Activated naive CD4-positive, alpha-beta T cell treated with anti-CD3 and anti-CD28 coated beads for 36 hours (primary cell): ENCODE measurements at regions of chr20 and their contacts with region 1.

Region 1: GRCh38 chr20:60057123-60057801 is 99.0 kb downstream of the CDH26 start:
- DNase-seq: peak; percentile 79
- H3K4me3 Mint-ChIP-seq: peak overlapping the region; percentile 68
- H3K27ac Mint-ChIP-seq: no peak overlapping the region
- H3K4me1 Mint-ChIP-seq: peaks cover 43% of the 10 kb centered on the region
- H3K27me3 Mint-ChIP-seq: no peaks in the 10 kb centered on the region

Region 2: GRCh38 chr20:59948828-59949720 is 108.2 kb before region 1 on chr20:
- CTCF ChIA-PET with region 1: interaction called, 21 read pairs
- intact Hi-C with region 1: loop called (anchors 2 kb)
- DNase-seq: peak; percentile 56
- H3K4me3 Mint-ChIP-seq: no peak overlapping the region
- H3K27ac Mint-ChIP-seq: peak overlapping the region; percentile 93
- H3K4me1 Mint-ChIP-seq: peaks cover 23% of the 10 kb centered on the region
- H3K27me3 Mint-ChIP-seq: no peaks in the 10 kb centered on the region

Region 3: GRCh38 chr20:60137629-60138245 is 80.5 kb after region 1 on chr20:
- CTCF ChIA-PET with region 1: interaction called, 5 read pairs
- intact Hi-C with region 1: loop called (anchors 2 kb)
- DNase-seq: peak; percentile 58
- H3K4me3 Mint-ChIP-seq: peak overlapping the region; percentile 60
- H3K27ac Mint-ChIP-seq: no peak overlapping the region
- H3K4me1 Mint-ChIP-seq: peaks cover 6% of the 10 kb centered on the region
- H3K27me3 Mint-ChIP-seq: no peaks in the 10 kb centered on the region

Region 4: GRCh38 chr20:60210779-60211617 is 153.7 kb after region 1 on chr20:
- CTCF ChIA-PET with region 1: interaction called, 15 read pairs
- intact Hi-C with region 1: loop called (anchors 2 kb)
- DNase-seq: peak; percentile 71
- H3K4me3 Mint-ChIP-seq: no peak overlapping the region
- H3K27ac Mint-ChIP-seq: no peak overlapping the region
- H3K4me1 Mint-ChIP-seq: peaks cover 3% of the 10 kb centered on the region
- H3K27me3 Mint-ChIP-seq: peaks cover 2% of the 10 kb centered on the region

Region 5: DNA sequence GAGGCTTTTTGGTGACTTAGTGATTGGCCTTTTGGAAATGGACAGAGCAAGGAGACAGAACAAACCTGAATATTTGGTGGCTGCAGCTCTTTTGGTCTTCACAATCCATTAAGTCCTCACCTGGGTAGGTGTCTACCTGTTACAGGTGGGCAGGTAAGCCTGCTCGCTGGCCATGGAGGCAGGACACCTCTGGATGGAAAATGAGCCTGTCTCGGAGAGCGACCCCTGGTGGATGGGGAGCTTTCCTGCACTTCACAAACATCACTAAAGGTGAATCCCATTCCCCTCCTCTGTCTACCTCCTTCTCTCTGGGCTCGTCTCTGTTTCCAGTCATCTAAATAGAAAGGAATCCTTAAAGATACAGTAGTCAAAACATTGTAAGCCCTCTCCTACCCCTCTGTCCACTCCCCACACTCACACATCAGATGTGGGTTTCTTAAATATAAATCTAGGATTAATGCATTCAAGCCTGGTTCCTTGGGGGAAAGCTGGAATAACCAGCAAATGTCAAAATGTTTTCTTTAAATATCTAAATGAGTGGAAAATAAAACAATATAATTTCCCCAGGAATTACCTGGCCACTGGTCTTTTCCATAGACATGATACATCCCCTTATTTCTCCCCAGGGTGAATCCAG is 205.8 kb after region 1 on chr20:
- CTCF ChIA-PET with region 1: interaction called, 35 read pairs
- intact Hi-C with region 1: loop called (anchors 1 kb)
- DNase-seq: peak; percentile 63
- H3K4me3 Mint-ChIP-seq: no peak overlapping the region
- H3K27ac Mint-ChIP-seq: no peak overlapping the region
- H3K4me1 Mint-ChIP-seq: peaks cover 11% of the 10 kb centered on the region
- H3K27me3 Mint-ChIP-seq: no peaks in the 10 kb centered on the region

Region 6: DNA sequence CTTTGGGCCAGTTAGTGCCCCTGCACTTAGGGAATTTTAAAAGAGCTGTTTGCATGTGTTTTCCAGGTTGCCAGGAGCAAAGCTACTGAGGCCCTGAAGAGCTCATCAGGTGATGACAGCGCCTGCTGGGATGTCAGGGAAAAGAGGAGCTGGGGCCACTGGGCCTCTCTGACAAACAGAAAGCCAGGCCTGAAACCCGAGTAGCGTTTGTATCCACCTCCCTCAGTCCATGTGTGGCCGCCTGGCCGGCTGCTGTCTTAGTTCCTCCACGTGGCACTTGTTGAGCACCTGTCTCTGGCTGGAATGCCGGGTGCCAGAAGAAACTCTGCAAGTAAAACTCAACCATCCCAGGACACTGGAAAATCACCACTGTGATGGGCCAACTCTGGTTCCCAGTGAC is 502.2 kb after region 1 on chr20:
- CTCF ChIA-PET with region 1: no interaction called
- intact Hi-C with region 1: no loop called
- DNase-seq: no peak
- H3K4me3 Mint-ChIP-seq: no peak overlapping the region
- H3K27ac Mint-ChIP-seq: no peak overlapping the region
- H3K4me1 Mint-ChIP-seq: no peaks in the 10 kb centered on the region
- H3K27me3 Mint-ChIP-seq: peaks cover 8% of the 10 kb centered on the region

Region 7: DNA sequence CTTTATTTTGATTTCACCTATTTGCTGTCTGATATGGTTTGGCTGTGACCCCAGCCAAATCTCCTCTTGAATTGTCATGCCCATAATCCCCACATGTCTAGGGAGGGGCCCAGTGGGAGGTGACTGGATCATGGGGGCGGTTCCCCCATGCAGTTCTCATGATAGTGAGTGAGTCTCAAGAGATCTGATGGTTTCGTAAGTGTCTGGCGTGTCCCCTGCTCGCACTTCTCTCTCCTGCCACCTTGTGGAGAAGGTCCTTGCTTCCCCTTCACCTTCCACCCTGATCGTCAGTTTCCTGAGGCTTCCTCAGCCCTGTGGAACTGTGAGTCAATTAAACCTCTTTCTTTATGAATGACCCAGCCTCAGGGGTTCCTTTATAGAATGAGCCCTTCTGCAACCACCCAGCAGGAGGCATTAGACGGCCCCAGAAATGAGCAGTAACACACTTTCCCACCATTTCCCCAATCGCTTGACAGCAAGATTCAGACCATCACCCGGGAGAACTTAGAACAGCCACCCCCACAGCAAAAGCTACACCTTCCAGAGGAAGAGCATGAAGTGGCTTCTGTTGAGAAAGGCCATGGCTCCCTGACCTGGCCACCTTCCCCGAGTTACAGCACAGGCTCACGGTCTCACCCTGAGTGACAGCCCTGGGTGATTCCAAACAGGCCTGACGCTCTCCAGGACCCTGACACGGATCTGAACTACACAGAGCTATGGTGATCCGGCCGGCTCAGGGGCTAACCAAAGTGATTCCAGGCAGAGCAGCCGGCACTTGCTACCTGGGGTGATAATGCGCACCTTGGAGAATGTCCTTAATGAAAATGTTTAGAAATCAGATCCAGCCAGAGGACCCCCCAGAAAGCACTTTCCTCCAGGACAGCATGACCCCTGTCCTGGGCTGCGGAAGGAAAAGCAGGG is 1063.6 kb after region 1 on chr20:
- CTCF ChIA-PET with region 1: no interaction called
- intact Hi-C with region 1: loop called (anchors 1 kb)
- DNase-seq: peak; percentile 61
- H3K4me3 Mint-ChIP-seq: no peak overlapping the region
- H3K27ac Mint-ChIP-seq: no peak overlapping the region
- H3K4me1 Mint-ChIP-seq: peaks cover 2% of the 10 kb centered on the region
- H3K27me3 Mint-ChIP-seq: no peaks in the 10 kb centered on the region

Region 8: GRCh38 chr20:61263084-61263695 is 1205.9 kb after region 1 on chr20:
- CTCF ChIA-PET with region 1: no interaction called
- intact Hi-C with region 1: loop called (anchors 1 kb)
- DNase-seq: peak; percentile 50
- H3K4me3 Mint-ChIP-seq: no peak overlapping the region
- H3K27ac Mint-ChIP-seq: no peak overlapping the region
- H3K4me1 Mint-ChIP-seq: no peaks in the 10 kb centered on the region
- H3K27me3 Mint-ChIP-seq: peaks cover 12% of the 10 kb centered on the region